ENCODE measurements at regions of chr7 and their contacts with region 1.

Region 1: GRCh38 chr7:6160191-6160623 is 112.2 kb downstream of the CYTH3 start:
- DNase-seq: no peak
- H3K4me3 ChIP-seq: no peak overlapping the region
- H3K4me3 Mint-ChIP-seq: peak overlapping the region in 1 of 7 donors; percentile 8
- H3K27ac ChIP-seq: no peak overlapping the region
- H3K27ac Mint-ChIP-seq: peak overlapping the region in 2 of 8 donors; percentile 12 to 50
- H3K4me1 ChIP-seq: no peaks in the 10 kb centered on the region
- H3K4me1 Mint-ChIP-seq: peaks cover 2 to 13% (median 13%) of the 10 kb centered on the region in 3 donors
- H3K27me3 ChIP-seq: no peaks in the 10 kb centered on the region
- H3K27me3 Mint-ChIP-seq: no peaks in the 10 kb centered on the region

Region 2: GRCh38 chr7:6181136-6181535 is 20.9 kb after region 1 on chr7:
- CTCF ChIA-PET with region 1: no interaction called
- POLR2A ChIA-PET with region 1: no interaction called
- DNase-seq: no peak
- H3K4me3 ChIP-seq: no peak overlapping the region
- H3K4me3 Mint-ChIP-seq: no peak overlapping the region
- H3K27ac ChIP-seq: no peak overlapping the region
- H3K27ac Mint-ChIP-seq: peak overlapping the region in 3 of 8 donors; percentile 5 to 76 (median 35)
- H3K4me1 ChIP-seq: no peaks in the 10 kb centered on the region
- H3K4me1 Mint-ChIP-seq: peaks cover 3 to 16% (median 7%) of the 10 kb centered on the region in 3 donors
- H3K27me3 ChIP-seq: no peaks in the 10 kb centered on the region
- H3K27me3 Mint-ChIP-seq: no peaks in the 10 kb centered on the region

Region 3: GRCh38 chr7:6323967-6324701 is 163.9 kb after region 1 on chr7:
- CTCF ChIA-PET with region 1: interaction called, 13 read pairs
- POLR2A ChIA-PET with region 1: no interaction called
- DNase-seq: no peak
- H3K4me3 ChIP-seq: no peak overlapping the region
- H3K4me3 Mint-ChIP-seq: no peak overlapping the region
- H3K27ac ChIP-seq: no peak overlapping the region
- H3K27ac Mint-ChIP-seq: peak overlapping the region in 1 of 8 donors; percentile 66
- H3K4me1 ChIP-seq: no peaks in the 10 kb centered on the region
- H3K4me1 Mint-ChIP-seq: peaks cover 4 to 5% (median 4%) of the 10 kb centered on the region in 3 donors
- H3K27me3 ChIP-seq: no peaks in the 10 kb centered on the region
- H3K27me3 Mint-ChIP-seq: peaks cover 0 to 8% of the 10 kb centered on the region in 2 donors